Aorta (tissue), 5 donors: ENCODE measurements at regions of chr10 and their contacts with region 1.

Region 1: DNA sequence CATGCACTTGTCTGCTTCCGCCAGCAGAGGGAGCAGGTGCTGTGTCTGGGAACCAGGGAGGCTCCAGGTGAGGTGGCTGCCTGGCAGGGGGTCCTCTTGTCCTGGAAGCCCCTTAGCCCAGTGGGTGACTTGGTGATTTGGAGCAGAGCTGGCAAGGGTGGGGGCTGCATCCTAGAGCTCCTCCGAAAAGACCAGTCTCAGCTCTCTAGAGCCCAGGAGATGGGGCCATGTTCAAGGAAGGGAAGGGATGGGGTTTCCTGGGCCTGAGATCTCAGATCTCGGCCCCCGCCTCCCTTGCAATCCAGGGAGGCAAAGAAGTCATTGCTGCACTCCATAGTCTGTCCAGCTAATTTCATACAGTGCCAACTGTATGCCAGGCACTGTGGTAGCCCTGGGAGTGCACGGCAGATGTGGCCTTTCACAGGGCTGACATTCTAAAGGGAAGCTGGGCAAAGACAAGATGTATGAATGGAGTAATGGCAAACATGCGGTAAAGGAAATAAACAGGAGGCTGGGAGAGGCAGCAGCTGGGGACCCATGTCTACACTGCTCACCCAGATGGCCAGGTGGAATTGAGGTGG is 20.4 kb upstream of the SFRP5 start:
- DNase-seq: peak; percentile 72 to 89
- ATAC-seq: no peak
- H3K4me3 ChIP-seq: no peak overlapping the region
- H3K27ac ChIP-seq: no peak overlapping the region
- H3K4me1 ChIP-seq: no peaks in the 10 kb centered on the region
- H3K27me3 ChIP-seq: no peaks in the 10 kb centered on the region

Region 2: DNA sequence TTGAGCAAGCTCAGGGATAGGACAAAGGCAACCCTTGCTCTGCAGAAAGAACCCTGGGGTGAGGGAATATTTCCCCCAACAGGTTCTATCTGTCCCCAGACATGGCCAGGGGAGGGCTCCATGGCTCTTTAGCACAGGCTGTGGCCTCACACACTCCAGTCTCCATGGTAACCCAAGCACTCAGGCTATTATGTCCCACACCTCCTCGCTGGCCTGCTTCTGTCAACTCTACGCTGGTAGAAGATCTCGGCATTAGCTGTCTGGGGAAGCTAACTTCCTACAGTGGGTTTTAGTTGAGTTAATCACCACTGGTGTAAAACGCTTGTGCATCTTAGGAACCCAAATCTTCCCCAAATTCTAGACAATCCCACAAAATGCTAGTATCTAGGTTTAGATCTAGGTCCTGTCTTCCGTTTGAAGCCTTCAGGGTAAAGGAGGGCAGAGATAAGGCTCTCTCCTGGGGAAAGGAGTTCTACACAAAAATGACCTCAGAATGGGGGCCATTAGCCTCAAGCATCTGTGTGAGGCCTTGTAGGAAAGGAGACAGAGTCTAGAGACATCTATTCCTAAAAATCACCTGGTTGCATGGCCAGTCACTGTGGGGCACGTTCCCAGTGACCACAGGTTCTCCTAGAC is 569.8 kb before region 1 on chr10:
- intact Hi-C with region 1: no loop called
- DNase-seq: no peak
- ATAC-seq: no peak
- H3K4me3 ChIP-seq: no peak overlapping the region
- H3K27ac ChIP-seq: no peak overlapping the region
- H3K4me1 ChIP-seq: no peaks in the 10 kb centered on the region
- H3K27me3 ChIP-seq: no peaks in the 10 kb centered on the region

Region 3: DNA sequence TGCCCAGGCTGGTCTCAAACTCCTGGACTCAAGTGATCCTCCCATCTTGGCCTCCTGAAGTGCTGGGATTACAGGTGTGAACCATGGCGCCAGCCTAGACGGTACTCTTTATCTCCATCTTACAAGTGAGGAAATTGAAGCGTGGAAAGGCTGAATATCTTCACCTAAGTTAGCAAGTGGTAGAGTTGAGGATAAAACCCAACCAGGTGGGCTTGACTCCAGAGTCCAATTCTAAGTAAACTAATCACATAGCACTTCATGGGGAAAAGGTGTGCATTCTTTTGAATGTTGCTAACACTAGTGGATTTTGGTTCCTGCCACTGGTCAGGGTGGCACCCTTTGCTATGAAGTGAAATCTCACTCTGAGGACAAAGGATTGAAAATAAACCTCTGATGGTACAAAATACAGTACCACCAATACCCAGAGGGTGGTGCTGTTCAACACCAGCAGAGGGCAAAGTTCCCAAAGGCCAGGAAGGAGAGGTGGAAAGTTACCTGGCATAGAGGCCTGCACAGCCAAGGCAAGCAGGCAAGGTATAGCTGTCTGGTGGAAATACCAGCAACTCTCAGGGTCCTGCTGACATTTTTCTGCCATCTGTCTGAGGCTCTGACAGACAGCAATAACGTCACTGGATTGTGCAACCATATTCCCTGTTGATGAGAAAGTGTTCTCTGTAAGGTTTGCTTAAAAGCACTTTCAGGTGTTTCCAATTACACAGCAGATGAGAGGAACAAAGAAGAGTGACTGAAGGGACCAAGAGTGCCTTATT is 328.7 kb before region 1 on chr10:
- intact Hi-C with region 1: no loop called
- DNase-seq: no peak
- ATAC-seq: peak; percentile 67
- H3K4me3 ChIP-seq: no peak overlapping the region
- H3K27ac ChIP-seq: peak overlapping the region in 1 of 2 donors; percentile 6
- H3K4me1 ChIP-seq: no peaks in the 10 kb centered on the region
- H3K27me3 ChIP-seq: no peaks in the 10 kb centered on the region

Region 4: DNA sequence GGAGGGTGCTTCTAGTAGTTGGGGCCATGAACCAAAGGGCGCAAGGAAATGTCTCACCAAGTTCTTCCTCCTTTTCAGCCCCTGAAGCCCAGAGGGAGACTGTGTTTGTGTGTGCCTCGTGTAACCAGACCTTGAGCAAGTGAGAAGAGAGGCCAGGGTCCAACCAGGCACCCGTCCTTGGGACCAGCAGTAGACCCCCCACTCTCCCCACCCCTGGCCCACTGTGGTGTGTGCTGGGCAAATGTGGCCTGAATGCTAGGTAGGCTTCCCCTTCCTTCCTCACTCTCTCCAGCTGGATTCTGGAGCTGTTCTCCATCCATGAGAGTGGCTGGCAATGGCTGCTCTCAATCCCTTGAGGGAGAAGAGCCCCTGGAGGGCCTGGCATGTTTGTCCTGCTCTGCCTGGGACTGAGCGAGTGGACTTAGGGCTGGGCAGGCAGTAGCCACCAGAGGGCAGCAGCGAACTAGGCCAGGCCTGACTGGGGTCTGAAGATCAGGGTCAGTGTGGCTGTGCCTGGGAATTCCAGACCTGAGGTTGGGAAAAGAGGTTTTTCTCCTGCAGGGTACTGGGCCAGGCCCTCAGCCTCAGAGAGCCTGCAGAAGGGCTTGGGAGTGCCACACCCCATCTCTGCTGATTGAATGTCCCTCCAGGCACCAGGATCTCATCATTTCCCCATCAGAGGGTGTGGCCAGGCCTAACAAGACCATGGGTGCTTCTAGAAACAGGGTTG is 32.9 kb before region 1 on chr10:
- intact Hi-C with region 1: no loop called
- DNase-seq: peak; percentile 71 to 84
- ATAC-seq: peak; percentile 68
- H3K4me3 ChIP-seq: no peak overlapping the region
- H3K27ac ChIP-seq: no peak overlapping the region
- H3K4me1 ChIP-seq: no peaks in the 10 kb centered on the region
- H3K27me3 ChIP-seq: no peaks in the 10 kb centered on the region

Region 5: DNA sequence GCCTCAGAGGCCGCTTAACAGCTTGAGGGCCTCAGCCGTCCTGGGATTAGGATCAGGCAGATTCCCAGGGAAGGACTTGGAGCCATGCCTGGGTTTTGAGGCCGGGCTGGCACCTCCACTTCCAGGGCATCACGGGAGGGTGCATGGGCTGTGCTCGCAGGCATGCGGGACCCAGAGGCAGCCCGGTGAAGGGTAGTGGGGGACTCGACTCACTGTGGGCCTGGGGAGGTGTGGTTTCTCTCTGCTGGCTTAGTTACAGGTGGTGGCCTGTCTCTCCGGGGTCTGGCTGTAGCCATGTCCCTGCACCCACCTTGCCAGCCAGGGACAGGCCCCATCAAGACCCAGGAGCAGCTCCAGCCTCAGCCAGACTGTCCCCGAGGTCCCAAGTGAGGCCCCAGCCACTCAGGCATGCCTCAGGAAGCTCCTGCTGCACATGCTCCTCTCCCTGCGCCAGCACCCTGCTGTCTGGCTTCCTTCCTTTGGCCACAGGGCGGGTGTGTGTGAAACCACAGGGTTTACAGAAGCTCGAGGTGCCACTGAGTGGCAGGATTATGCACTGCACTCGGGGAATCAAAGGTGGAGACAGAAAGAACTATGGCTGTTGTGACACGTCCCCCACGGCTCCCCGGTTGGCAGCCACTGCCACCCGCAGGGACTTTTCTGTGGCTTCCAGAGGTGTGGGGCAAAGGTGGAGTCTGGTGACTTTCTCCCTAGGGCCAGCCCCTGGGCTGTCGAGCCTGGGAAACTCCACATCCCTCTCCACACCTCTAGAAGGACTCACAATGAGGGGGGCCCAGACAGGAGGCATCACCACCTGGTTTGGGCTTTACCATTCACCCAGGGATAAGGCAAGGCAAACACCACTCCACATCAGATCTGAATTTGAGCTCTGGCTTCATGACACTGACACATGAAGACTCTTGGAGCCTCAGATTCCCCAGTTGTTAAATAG is 77.1 kb after region 1 on chr10:
- intact Hi-C with region 1: loop called (anchors 1 to 2 kb)
- DNase-seq: peak; percentile 89 to 91
- ATAC-seq: peak; percentile 79
- H3K4me3 ChIP-seq: no peak overlapping the region
- H3K27ac ChIP-seq: no peak overlapping the region
- H3K4me1 ChIP-seq: no peaks in the 10 kb centered on the region
- H3K27me3 ChIP-seq: no peaks in the 10 kb centered on the region